ENCODE measurements at regions of chr16 and their contacts with region 1.

Region 1: GRCh38 chr16:50202926-50203624 is 50.0 kb downstream of the TENT4B start:
- DNase-seq: no peak
- ATAC-seq: peak; percentile 64 to 76
- H3K4me3 ChIP-seq: no peak overlapping the region
- H3K27ac ChIP-seq: peak overlapping the region; percentile 4
- H3K4me1 ChIP-seq: peaks cover 10% of the 10 kb centered on the region
- H3K27me3 ChIP-seq: no peaks in the 10 kb centered on the region

Region 2: DNA sequence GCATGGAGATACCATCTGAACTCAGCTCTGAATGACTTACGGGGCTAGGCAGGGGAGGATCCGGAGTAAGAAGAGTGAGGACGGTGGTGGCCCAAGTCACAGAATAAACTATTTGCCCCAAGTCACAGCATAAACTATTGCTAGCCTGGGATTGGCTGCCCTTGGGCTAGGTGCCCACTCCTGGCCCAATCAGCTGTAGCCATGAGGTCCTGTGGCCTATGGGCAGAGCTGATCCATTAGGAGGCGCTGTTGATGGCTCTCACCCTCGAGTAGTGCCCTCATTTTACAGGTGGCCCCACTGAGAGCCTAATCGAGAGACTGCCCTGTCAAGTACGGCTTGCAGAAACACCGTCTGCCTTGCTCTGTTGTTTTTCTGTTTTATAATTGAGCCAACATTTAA is 284.8 kb before region 1 on chr16:
- intact Hi-C with region 1: no loop called
- DNase-seq: no peak
- ATAC-seq: no peak
- H3K4me3 ChIP-seq: no peak overlapping the region
- H3K27ac ChIP-seq: no peak overlapping the region
- H3K4me1 ChIP-seq: no peaks in the 10 kb centered on the region
- H3K27me3 ChIP-seq: no peaks in the 10 kb centered on the region

Region 3: GRCh38 chr16:50024684-50025536 is 178.2 kb before region 1 on chr16 and contains the start of gene CNEP1R1:
- intact Hi-C with region 1: loop called in 1 of 4 experiments (anchors 10 kb)
- DNase-seq: peak; percentile 94 to 97 (median 97)
- ATAC-seq: peak; percentile 100
- H3K4me3 ChIP-seq: peak within 1 kb of the TSS; percentile 99
- H3K27ac ChIP-seq: peak within 1 kb of the TSS; percentile 73
- H3K4me1 ChIP-seq: no peaks in the 10 kb centered on the region
- H3K27me3 ChIP-seq: no peaks in the 10 kb centered on the region
- total RNA-seq, gene CNEP1R1: 14.1 to 20.6 (median 19.1) TPM

Region 4: DNA sequence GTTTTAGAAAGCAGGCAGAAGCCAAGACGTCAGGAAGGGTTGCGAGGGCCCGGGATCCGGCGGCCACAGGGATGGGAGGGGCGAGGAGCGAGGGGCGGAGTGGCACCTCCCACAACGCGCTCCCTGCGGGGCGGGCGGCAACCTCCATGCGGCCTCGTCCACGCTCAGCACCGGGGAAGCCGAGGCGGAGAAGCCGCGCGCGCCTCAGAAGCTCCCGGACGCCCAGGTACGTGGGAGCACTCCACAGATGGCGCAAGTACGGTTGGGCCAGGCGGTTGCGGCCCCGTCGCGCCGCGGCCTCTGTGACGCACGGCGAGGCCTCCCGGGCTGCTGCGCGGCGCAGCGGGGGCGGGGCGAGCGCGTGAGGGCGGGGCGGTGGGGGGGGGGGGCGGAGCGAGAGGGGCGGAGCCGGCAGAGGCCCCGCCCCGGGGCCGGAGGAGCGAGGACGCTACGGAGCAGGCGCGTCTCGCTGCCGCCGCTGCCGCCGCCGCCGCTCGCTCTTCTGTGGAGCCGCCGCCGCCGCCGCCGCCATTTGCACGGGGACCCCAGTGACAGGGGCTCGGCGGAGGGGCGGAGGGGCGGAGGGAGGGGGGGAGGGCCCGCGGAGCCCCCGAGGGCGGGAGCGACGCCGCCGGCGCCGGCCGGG is 50.1 kb before region 1 on chr16 and contains the start of gene TENT4B:
- intact Hi-C with region 1: loop called in 1 of 4 experiments (anchors 10 kb)
- DNase-seq: peak; percentile 88 to 96 (median 94)
- ATAC-seq: peak; percentile 97
- H3K4me3 ChIP-seq: peak within 1 kb of the TSS; percentile 80
- H3K27ac ChIP-seq: peak within 1 kb of the TSS; percentile 90
- H3K4me1 ChIP-seq: peaks cover 4% of the 10 kb centered on the region
- H3K27me3 ChIP-seq: no peaks in the 10 kb centered on the region
- total RNA-seq, gene TENT4B: 6.3 to 8.4 (median 7.3) TPM